GM12878 (cell line): ENCODE measurements at regions of chr1 and their contacts with region 1.

Region 1: DNA sequence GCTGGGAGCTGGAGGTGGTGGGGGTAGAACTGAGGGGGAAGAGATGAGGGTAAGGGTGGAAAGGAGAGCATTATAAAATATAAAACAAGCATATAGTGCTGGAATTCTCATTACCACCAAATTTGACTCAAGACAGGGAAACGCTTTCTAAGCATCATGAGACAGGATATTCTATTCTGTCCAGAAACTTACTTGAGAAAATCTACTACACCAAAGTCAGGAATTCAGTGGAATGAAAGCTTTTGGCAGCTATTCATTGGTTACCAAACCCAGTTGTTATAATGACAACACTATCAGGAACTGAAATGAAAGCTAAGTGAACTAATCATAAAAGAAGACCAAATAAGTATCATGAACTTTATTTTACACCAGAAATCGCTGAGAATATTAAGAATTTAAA is 14.5 kb downstream of the AIDA start:
- DNase-seq: no peak
- ATAC-seq: no peak
- H3K4me3 ChIP-seq: no peak overlapping the region
- H3K27ac ChIP-seq: no peak overlapping the region
- H3K4me1 ChIP-seq: no peaks in the 10 kb centered on the region
- H3K27me3 ChIP-seq: no peaks in the 10 kb centered on the region
- CTCF ChIP-seq: no peak
- EP300 ChIP-seq: no peak
- POLR2A ChIP-seq: no peak
- RAD21 ChIP-seq: no peak

Region 2: GRCh38 chr1:222387007-222387814 is 310.6 kb before region 1 on chr1:
- CTCF ChIA-PET with region 1: no interaction called
- POLR2A ChIA-PET with region 1: no interaction called
- RAD21 ChIA-PET with region 1: no interaction called
- SMC1A ChIA-PET with region 1: no interaction called
- in situ Hi-C with region 1: no loop called
- intact Hi-C with region 1: no loop called
- DNase-seq: no peak
- ATAC-seq: peak; percentile 31
- H3K4me3 ChIP-seq: no peak overlapping the region
- H3K27ac ChIP-seq: no peak overlapping the region
- H3K4me1 ChIP-seq: no peaks in the 10 kb centered on the region
- H3K27me3 ChIP-seq: no peaks in the 10 kb centered on the region; a peak in 1 of 4 replicates
- CTCF ChIP-seq: peak in 2 of 3 experiments; percentile 6 to 20; a peak in 2 of 6 replicates
- EP300 ChIP-seq: no peak
- POLR2A ChIP-seq: no peak
- RAD21 ChIP-seq: no peak

Region 3: DNA sequence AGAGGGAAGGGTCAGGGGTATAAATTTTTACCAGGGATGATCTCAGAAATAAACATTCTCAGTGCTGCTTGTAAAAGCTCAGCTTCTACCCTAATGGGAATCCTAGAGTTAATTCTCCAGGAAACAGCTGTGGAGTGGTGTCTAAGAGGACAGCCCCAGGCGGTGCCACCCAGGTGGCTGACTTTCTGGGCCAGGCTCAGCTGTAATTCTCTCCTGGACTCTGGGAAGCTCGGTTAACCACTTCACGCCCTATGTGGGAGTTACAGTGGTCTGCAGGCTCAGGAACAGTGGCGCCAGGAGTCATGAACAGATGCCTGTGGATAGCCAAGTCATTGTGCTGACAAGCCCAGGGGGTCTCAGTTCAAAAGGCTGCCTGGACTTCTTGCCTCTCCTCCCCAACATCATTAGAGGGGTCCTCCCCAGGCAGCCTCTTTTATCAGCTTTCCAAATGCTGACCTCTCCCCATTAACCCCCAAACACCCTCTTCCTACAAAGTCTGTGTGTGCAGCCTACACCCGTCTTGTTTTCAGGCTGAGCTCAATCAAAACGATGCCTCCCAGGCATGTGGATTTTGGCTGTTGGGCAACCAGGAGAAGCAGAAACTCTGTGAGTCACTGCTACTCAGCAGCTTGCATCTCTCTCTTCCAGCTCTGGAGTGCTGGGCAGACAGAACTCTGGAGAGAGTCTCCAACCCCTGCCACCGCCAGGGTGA is 151.1 kb before region 1 on chr1:
- CTCF ChIA-PET with region 1: no interaction called
- POLR2A ChIA-PET with region 1: no interaction called
- RAD21 ChIA-PET with region 1: no interaction called
- SMC1A ChIA-PET with region 1: no interaction called
- in situ Hi-C with region 1: no loop called
- intact Hi-C with region 1: no loop called
- DNase-seq: no peak
- ATAC-seq: no peak
- H3K4me3 ChIP-seq: no peak overlapping the region
- H3K27ac ChIP-seq: no peak overlapping the region
- H3K4me1 ChIP-seq: no peaks in the 10 kb centered on the region
- H3K27me3 ChIP-seq: no peaks in the 10 kb centered on the region
- CTCF ChIP-seq: no peak
- EP300 ChIP-seq: no peak
- POLR2A ChIP-seq: no peak
- RAD21 ChIP-seq: no peak

Region 4: DNA sequence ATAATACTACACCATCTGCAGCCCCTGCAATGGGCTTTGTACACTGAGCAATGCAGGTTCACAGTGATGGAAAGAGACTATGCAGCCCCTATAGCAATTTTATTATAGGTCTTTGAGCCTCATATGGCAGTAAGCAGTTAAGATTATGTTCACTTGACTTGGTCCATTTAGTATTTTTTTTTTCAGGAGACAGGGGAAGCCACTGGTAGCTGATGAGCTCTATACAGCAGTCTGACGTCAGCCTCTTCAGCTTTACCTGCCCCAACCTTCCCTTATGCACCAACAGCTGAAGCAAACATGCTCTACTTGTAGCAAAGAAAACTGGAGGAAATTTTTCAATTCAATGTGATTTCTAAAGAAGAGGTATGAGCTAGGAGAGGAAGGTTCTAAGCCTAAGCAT is 17.7 kb before region 1 on chr1:
- CTCF ChIA-PET with region 1: no interaction called
- POLR2A ChIA-PET with region 1: no interaction called
- RAD21 ChIA-PET with region 1: no interaction called
- SMC1A ChIA-PET with region 1: no interaction called
- in situ Hi-C with region 1: no loop called
- intact Hi-C with region 1: loop called (anchors 2 kb)
- DNase-seq: no peak
- ATAC-seq: no peak
- H3K4me3 ChIP-seq: no peak overlapping the region
- H3K27ac ChIP-seq: no peak overlapping the region
- H3K4me1 ChIP-seq: no peaks in the 10 kb centered on the region
- H3K27me3 ChIP-seq: no peaks in the 10 kb centered on the region
- CTCF ChIP-seq: no peak
- EP300 ChIP-seq: no peak
- POLR2A ChIP-seq: no peak
- RAD21 ChIP-seq: no peak

Region 5: DNA sequence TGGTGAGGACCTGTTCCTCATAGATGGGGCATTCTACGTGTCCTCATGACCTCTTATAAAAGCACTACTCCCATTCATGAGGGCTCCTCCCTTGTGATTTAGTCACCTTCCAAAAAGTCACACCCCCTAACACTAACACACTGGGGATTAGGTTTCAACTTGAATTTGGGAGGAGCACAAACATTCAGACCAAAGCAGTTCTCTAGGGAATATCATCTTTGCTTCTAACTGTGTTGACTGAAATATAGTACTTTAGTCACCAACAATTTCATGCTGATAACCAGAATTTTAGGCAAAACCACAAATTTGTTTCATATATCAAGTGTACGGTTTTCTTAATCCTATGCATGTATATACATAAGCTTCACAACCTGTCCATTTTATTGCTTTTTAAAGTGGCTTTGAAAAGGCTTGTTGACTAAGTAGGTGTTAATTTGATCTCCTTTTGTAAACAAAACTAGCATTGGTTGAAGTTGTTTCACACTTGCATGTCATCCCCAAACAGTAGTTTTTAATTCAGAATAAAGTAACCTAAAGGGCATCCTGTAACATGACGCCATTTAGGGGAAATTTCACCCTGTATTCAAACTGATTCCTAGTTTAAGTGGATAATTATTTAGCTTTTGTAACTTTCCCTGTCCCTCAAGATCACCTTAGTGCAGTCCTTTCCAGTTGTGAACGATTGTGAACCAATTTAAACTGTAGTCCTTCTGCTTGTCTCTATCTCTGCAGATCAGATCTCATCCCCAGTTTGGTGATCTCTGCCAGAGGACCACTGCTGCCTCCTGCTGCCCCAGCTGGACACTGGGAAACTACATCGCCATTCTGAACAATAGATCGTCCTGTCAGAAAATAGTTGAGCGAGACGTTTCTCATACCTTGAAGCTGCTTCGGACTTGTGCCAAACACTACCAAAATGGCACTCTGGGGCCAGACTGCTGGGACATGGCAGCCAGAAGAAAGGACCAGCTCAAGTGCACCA is 304.1 kb after region 1 on chr1:
- CTCF ChIA-PET with region 1: no interaction called
- POLR2A ChIA-PET with region 1: no interaction called
- RAD21 ChIA-PET with region 1: no interaction called
- SMC1A ChIA-PET with region 1: no interaction called
- in situ Hi-C with region 1: no loop called
- intact Hi-C with region 1: no loop called
- DNase-seq: no peak
- ATAC-seq: no peak
- H3K4me3 ChIP-seq: no peak overlapping the region
- H3K27ac ChIP-seq: no peak overlapping the region
- H3K4me1 ChIP-seq: no peaks in the 10 kb centered on the region
- H3K27me3 ChIP-seq: no peaks in the 10 kb centered on the region
- CTCF ChIP-seq: no peak
- EP300 ChIP-seq: no peak
- POLR2A ChIP-seq: no peak
- RAD21 ChIP-seq: no peak